ENCODE measurements at regions of chr6 and their contacts with region 1.

Region 1: DNA sequence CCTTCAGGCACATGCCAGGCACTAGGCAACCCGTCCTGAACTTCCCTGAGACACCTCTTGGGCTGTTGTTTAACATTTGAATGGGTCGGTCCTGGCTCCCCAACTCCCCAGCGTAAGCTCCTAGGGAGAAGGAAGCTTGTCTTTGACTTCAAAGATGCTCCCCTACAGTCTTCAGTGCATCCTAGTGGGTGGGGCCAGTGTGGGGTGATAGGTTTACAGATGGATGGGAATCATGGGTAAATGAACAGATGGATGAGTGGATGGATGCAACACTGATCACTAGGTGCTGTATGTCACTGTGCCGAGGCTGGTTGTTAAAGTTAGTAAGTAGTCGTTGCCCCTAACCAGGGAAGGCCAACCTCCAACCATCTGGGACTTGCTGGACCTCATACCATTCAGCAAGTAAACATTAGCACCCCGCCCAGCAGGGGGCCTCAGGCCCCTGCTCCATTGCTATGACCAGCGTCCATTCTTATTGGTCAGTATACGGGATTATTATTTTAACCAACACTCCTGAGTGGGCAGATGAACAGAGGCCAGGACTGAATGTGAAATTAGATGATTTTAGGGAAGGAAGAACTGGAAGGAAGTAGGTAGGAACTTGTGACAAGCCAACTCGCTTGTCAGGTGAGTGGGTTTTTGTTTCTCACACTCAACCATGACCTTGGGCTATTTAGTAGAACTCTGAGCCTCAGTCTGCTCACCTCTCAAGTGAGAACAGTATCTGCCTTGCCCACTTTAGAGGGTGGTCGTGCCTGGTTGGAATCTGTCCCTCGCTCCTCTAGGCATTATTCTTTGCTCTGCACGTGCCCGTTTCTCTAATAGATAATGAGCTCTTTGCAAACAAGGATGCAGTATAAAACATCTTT is 82.9 kb upstream of the FOXP4 start:
- DNase-seq: peak; percentile 23 to 38 (median 37)
- H3K4me3 ChIP-seq: no peak overlapping the region
- H3K27ac ChIP-seq: no peak overlapping the region
- H3K4me1 ChIP-seq: peaks cover 0 to 3% (median 2%) of the 10 kb centered on the region in 4 experiments
- H3K27me3 ChIP-seq: peaks cover 0 to 15% (median 4%) of the 10 kb centered on the region in 5 experiments

Region 2: DNA sequence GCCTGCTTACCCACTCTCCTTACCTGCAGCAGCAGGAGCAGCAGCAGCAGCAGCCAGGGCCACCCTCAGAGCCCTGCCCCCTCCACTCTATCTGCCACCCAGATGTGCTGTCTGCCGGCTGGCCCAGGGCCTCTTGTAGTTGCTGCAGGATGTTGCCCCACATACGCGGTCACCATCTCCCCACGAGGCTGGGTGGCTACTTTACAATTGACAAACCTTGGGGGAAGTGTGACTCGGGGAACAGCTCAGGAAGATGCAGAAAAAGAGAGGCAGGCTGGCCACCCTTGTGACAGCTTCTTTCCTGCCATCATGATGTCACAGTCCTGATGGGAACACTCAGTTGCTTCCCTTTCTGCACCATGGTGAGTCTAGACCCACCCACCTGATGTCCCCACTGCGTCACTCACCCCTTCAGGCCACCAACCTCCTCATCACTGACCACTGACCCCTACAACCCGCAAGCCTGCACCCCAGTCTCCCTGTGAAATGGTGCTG is 191.3 kb before region 1 on chr6:
- CTCF ChIA-PET with region 1: no interaction called
- POLR2A ChIA-PET with region 1: no interaction called
- DNase-seq: peak; percentile 51 to 90 (median 89)
- H3K4me3 ChIP-seq: peak overlapping the region in 1 of 7 experiments; percentile 17
- H3K27ac ChIP-seq: no peak overlapping the region
- H3K4me1 ChIP-seq: peaks cover 6 to 22% (median 12%) of the 10 kb centered on the region in 4 experiments
- H3K27me3 ChIP-seq: no peaks in the 10 kb centered on the region

Region 3: DNA sequence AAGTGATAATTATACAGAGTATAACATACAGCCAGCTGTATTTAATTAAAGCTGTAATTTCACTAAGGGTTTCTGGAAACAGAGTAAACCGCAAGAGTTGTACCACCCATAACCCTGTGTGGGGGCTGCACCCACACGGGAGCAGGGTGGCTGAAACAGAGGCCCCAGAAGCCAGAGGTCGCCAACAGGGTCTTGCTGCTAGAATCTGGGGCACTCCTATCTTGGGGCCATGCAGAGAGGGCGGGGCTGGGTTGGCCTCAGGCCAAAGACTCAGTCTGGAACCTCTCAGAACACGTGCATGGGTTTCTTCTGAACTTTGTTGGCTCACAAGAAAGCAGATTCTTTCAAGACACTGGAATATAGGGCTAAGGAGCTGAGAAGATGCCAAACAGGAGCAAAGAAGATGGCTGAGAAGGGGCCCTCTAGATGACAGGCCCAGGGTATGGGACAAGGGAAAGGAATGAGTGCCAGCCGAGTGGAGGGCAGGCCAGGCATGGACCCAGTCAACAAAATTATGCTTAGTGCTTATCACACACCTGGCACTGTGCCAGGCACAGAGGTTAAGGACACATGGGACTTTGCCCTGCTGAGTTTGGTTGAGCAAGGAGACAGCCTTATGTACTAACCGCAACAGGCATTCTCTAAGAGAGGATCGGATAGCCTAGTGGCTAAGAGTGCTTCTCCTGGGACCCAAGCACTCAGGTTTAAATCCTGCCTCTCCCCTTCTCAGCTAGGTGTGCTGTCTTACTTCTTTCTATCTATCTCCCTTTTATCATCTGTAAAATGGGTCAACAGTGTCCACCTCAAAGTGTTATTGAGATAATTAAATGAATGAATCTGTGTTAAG is 13.7 kb before region 1 on chr6:
- CTCF ChIA-PET with region 1: interaction called, 13 read pairs
- POLR2A ChIA-PET with region 1: no interaction called
- DNase-seq: peak in 1 of 3 donors; percentile 19
- H3K4me3 ChIP-seq: no peak overlapping the region
- H3K27ac ChIP-seq: no peak overlapping the region
- H3K4me1 ChIP-seq: no peaks in the 10 kb centered on the region
- H3K27me3 ChIP-seq: peaks cover 0 to 18% (median 2%) of the 10 kb centered on the region in 5 experiments

Region 4: DNA sequence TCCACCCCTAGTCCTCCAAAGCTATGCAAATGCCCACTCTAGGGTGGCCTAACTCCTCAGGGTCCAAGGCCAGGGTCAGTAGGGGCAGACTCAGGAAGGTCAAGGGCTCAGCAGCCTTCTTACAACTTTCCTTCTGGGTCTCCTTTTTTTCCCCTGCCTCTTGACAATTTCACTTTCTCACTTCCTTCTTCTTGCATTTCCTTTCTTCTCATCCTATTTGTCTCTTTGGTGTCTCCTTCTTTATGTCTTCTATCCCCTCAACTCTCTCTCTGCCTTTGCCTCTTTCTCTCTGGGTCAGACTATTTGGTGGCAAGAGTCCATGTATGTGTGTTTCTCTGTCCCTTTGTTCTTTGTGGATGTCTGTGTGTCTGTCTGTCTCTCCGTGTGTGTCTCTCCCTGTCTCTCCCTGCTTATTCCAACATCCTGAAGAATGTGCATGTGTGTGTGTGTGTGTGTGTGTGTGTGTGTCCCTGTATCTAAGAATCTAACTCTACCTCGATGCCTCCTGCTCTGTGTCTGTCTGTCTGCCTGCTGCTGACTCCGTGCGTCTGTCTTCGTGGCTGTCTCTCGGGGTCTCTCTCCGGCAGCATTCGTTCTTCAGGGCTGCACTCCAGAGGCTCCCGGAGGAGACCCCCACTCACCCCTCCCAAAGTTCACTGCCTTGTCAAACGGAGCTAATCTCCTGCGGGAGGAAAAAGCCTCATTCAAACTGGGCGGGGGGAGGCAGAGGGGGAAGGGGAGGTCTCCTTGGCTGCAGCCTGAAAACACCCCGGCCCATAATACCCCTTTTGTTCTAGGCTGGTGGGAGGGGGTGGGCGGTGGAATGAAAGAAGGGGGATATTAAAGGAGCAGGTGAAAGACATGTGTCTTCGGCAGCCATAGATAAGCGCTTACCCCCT is 31.2 kb after region 1 on chr6:
- CTCF ChIA-PET with region 1: no interaction called
- POLR2A ChIA-PET with region 1: no interaction called
- DNase-seq: no peak
- H3K4me3 ChIP-seq: no peak overlapping the region
- H3K27ac ChIP-seq: no peak overlapping the region
- H3K4me1 ChIP-seq: peaks cover 0 to 2% (median 0%) of the 10 kb centered on the region in 4 experiments
- H3K27me3 ChIP-seq: peaks cover 0 to 51% (median 8%) of the 10 kb centered on the region in 5 experiments

Region 5: DNA sequence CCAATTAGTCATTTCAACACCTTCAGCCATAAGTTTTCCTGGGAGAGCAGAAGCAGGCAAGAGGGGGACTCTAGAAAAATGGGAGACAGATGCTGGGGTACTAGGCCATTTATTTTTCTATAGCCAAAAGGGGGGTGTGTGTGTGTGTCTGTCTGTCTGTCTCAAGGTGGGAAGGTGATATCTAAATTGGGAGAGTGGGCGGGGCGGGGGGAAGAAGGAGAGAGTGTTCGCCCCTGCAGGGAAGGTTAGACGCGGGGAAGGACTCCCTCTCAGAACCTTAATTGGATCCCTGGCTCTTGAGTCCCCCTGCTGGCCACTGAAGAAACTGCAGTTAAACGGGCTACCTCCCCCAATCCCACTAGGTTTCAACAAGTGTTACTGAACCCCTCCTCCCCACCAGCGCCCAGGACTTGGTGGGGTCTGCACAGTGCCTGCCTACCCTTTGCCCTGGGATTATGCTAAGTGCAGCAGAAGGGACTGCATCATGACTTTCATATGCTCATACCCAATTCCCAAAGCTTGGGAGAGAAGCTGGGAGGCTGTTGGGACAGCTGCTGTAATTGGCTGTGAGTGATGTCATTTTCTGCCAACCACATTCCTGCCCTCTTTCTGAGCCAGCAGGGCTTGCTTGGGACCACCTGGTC is 128.7 kb after region 1 on chr6:
- CTCF ChIA-PET with region 1: interaction called, 13 read pairs
- POLR2A ChIA-PET with region 1: no interaction called
- DNase-seq: peak; percentile 65 to 80 (median 73)
- H3K4me3 ChIP-seq: no peak overlapping the region
- H3K27ac ChIP-seq: no peak overlapping the region
- H3K4me1 ChIP-seq: no peaks in the 10 kb centered on the region
- H3K27me3 ChIP-seq: no peaks in the 10 kb centered on the region

Region 6: GRCh38 chr6:41683510-41684310 is 220.4 kb after region 1 on chr6:
- CTCF ChIA-PET with region 1: interaction called, 17 read pairs
- POLR2A ChIA-PET with region 1: no interaction called
- DNase-seq: peak; percentile 78 to 84 (median 82)
- H3K4me3 ChIP-seq: peak overlapping the region in 5 of 7 experiments; percentile 34 to 76 (median 69)
- H3K27ac ChIP-seq: peak overlapping the region; percentile 5 to 15
- H3K4me1 ChIP-seq: peaks cover 0 to 19% (median 17%) of the 10 kb centered on the region in 4 experiments
- H3K27me3 ChIP-seq: no peaks in the 10 kb centered on the region